ENCODE measurements at regions of chr6 and their contacts with region 1.

Region 1: DNA sequence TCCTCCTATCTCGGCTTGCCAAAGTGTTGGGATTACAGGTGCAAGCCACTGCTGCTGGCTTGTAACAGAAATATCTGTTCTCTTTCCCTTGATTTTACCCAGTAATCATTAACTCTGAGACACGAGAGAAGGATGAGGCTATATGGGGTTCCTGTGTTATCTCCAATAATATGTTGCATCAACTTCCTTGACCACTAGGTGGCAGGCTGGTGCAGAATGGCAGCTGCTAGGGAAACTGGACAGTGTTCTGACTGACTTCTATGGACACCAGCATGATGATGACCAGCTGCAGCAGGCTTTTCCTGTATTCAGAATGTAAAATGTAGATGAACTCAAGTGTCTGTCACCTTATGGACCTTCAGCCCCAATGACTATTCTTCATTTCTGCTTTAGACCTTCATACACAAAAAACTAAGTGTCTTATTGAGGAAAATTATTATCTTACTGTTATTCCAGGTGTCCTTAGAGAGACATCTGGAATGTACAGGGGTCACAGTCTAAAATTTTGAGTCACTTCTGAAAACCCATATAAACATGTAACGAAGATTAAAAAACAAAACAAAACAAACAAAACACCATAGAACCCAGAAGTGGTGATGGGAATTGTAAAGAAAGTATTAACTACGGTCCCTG is 20.4 kb upstream of the CD109 start:
- DNase-seq: peak; percentile 70 to 81
- H3K4me3 ChIP-seq: no peak overlapping the region
- H3K27ac ChIP-seq: no peak overlapping the region
- H3K4me1 ChIP-seq: peaks cover 16% of the 10 kb centered on the region
- H3K27me3 ChIP-seq: no peaks in the 10 kb centered on the region
- CTCF ChIP-seq: peak; percentile 96

Region 2: GRCh38 chr6:73471686-73472290 is 203.8 kb before region 1 on chr6:
- CTCF ChIA-PET with region 1: interaction called, 16 read pairs
- POLR2A ChIA-PET with region 1: no interaction called
- intact Hi-C with region 1: no loop called
- DNase-seq: no peak
- H3K4me3 ChIP-seq: no peak overlapping the region
- H3K27ac ChIP-seq: no peak overlapping the region
- H3K4me1 ChIP-seq: no peaks in the 10 kb centered on the region
- H3K27me3 ChIP-seq: no peaks in the 10 kb centered on the region
- CTCF ChIP-seq: no peak

Region 3: DNA sequence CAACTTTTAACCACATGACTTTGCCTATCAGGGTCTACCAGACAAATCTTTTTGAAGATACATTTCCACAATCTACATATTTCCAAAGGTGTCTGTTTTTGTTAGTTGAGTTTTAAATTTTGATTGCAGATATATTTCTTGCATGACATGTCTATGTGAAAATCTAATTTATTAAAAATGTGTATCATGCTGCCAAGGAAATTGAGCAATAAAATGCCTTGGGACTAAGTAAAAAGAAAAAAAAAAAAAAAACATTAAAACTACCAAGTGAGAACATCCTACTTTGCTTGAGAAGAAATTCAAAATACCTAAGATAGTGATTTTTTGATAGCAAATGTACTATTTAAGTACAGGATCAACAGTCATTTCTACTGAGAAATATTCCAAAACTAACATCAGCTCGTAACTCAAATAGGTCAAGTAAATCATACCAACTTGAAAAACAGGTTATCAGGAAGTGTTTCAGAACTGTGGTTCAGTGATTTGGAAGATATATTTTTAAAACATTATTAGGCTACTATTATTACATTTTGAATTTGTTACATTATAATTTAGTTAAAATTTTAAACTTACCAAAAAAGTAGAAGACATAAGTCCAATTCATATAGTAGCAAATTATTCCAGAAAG is 39.4 kb before region 1 on chr6:
- CTCF ChIA-PET with region 1: no interaction called
- POLR2A ChIA-PET with region 1: no interaction called
- intact Hi-C with region 1: no loop called
- DNase-seq: peak in 1 of 2 experiments; percentile 70
- H3K4me3 ChIP-seq: no peak overlapping the region
- H3K27ac ChIP-seq: peak overlapping the region; percentile 62
- H3K4me1 ChIP-seq: peaks cover 49% of the 10 kb centered on the region
- H3K27me3 ChIP-seq: no peaks in the 10 kb centered on the region
- CTCF ChIP-seq: no peak

Region 4: DNA sequence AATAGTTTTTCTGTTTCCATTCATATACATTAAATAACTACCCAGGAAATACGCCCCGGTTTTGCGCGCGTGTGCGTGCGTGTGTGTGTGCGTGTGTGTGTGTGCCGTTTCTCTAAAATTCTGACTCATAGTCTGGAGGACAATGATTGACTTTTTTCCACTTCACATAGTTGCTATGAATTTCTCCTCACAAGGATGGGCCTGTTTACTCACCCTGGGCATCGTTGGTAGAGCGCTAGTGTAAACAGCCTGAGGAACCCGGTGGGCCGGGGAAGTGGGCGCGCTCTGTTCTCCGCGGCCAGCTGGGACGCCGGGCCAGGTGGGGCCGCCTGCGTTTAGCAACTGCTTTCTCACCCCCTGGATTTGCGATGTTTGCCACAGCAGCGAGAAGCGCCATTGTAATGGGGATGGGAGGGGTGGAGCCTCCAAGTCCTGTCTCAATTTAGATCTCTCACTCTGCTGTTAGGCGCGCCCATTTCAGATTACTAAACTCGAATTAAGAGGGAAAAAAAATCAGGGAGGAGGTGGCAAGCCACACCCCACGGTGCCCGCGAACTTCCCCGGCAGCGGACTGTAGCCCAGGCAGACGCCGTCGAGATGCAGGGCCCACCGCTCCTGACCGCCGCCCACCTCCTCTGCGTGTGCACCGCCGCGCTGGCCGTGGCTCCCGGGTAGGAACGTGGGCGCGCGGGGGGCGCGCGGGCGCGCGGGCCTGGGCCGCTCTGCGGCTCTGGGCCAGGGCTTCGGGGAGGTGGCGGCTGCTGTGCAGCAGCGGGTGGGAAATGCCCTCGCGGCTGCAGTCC is 20.2 kb after region 1 on chr6 and contains the start of gene CD109:
- CTCF ChIA-PET with region 1: interaction called, 5 read pairs
- POLR2A ChIA-PET with region 1: interaction called, 4 read pairs
- intact Hi-C with region 1: loop called (anchors 1 kb)
- DNase-seq: peak; percentile 70 to 86
- H3K4me3 ChIP-seq: peak within 1 kb of the TSS; percentile 62
- H3K27ac ChIP-seq: peak within 1 kb of the TSS; percentile 85
- H3K4me1 ChIP-seq: peaks cover 41% of the 10 kb centered on the region
- H3K27me3 ChIP-seq: no peaks in the 10 kb centered on the region
- CTCF ChIP-seq: no peak
- total RNA-seq, gene CD109: 46.8 and 50.7 TPM in 2 replicates

Region 5: GRCh38 chr6:73710470-73710869 is 34.9 kb after region 1 on chr6:
- CTCF ChIA-PET with region 1: no interaction called
- POLR2A ChIA-PET with region 1: interaction called, 10 read pairs
- intact Hi-C with region 1: loop called (anchors 5 kb)
- DNase-seq: peak; percentile 86 to 92
- H3K4me3 ChIP-seq: no peak overlapping the region
- H3K27ac ChIP-seq: peak overlapping the region; percentile 33
- H3K4me1 ChIP-seq: peaks cover 19% of the 10 kb centered on the region
- H3K27me3 ChIP-seq: no peaks in the 10 kb centered on the region
- CTCF ChIP-seq: no peak

Region 6: DNA sequence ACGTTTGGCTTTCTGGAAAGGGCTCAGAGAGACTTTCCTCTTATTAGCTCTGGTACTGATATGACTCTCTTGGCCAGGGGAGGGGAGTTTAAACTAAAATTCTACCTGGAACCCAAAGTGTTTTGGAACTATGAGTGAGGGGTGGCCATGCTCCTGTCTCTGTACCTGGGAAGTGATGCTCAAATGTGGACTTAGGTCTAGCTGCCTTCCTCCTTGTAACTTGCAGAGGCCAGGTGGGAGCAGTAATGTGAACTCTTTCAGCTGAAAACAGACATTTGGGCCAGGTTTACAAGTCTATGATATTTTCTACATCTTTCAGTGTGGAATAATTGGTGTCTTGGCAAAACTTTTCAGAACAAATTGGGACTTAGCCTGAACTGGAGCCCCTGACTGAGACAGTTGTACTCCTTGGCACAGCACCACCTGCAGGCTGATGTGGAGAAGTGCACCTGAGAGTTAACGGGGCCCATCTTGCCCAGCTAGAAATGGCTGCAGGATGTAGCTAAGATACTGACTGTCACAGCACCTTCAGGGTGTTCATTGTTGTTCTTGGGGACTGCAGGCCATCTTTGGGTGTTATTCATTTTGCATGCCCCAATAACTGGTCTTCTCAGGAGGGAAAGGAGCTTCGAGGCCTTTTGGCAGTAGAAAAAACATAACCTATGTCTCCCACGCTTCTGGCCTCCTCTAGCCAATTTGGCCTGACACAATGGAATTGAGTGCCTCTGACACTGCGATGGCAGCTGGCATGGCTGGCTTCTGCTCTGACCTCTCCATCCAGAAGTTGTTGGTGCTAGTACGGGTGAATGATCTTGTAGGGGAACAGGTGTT is 57.5 kb after region 1 on chr6:
- CTCF ChIA-PET with region 1: interaction called, 16 read pairs
- POLR2A ChIA-PET with region 1: no interaction called
- intact Hi-C with region 1: loop called (anchors 1 kb)
- DNase-seq: peak; percentile 48 to 65
- H3K4me3 ChIP-seq: no peak overlapping the region
- H3K27ac ChIP-seq: no peak overlapping the region
- H3K4me1 ChIP-seq: no peaks in the 10 kb centered on the region
- H3K27me3 ChIP-seq: no peaks in the 10 kb centered on the region
- CTCF ChIP-seq: peak; percentile 95

Region 7: DNA sequence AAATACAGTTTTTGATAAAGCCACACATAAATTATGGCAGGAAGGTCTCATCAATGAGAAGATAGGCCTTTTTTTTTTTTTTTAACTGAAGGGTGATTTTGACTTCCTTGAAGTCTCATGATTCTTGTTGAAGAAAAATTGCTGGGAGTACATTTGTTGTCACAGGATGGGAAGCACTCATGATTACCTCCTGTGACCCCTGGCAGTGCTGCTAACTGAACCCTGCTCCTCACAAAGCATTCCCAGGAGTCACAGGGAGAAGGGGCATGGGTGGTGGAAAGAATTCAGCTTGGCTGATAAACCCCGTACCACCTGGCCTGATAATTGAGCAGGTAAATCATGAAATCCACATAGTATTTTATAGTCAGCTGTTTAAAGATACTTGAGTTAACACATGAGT is 107.3 kb after region 1 on chr6:
- CTCF ChIA-PET with region 1: no interaction called
- POLR2A ChIA-PET with region 1: no interaction called
- intact Hi-C with region 1: no loop called
- DNase-seq: no peak
- H3K4me3 ChIP-seq: no peak overlapping the region
- H3K27ac ChIP-seq: no peak overlapping the region
- H3K4me1 ChIP-seq: no peaks in the 10 kb centered on the region
- H3K27me3 ChIP-seq: no peaks in the 10 kb centered on the region
- CTCF ChIP-seq: no peak

Region 8: DNA sequence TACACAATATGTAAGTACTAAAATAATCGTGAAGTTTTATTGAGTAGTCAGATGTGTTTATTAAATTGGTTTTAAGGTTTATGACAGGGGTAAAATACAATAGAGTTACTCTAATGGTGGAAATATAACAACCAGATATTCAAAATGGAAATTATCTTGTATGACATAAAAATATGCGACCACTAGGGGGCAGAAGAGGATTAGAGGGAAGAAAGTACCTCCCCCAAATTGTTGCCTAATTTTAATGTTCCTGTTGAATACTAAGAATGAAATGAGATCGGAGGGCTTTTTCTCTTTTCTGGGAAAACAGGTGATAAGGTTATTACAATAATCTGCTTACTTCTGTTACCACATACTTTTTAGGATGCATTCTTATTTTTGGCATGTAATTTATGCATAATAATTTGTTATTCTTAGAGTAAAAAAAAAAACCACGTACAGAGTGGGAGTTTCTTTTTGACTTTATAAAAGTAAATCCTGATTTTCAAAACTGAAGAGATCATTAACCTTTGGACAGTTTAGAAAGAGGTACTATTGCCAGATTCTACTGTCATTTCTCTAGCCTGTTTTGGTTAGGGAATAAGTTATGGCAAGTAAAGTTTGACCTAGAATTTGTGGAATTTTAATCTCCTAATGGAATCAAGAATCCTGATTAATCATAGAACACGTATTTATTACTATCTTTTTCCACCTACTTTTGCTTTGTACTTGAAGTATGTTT is 179.6 kb after region 1 on chr6:
- CTCF ChIA-PET with region 1: no interaction called
- POLR2A ChIA-PET with region 1: no interaction called
- intact Hi-C with region 1: loop called (anchors 5 kb)
- DNase-seq: no peak
- H3K4me3 ChIP-seq: no peak overlapping the region
- H3K27ac ChIP-seq: no peak overlapping the region
- H3K4me1 ChIP-seq: no peaks in the 10 kb centered on the region
- H3K27me3 ChIP-seq: no peaks in the 10 kb centered on the region
- CTCF ChIP-seq: peak; percentile 91

Measured in PC-9 (cell line).